ENCODE measurements at regions of chr1 and their contacts with region 1.

Region 1: DNA sequence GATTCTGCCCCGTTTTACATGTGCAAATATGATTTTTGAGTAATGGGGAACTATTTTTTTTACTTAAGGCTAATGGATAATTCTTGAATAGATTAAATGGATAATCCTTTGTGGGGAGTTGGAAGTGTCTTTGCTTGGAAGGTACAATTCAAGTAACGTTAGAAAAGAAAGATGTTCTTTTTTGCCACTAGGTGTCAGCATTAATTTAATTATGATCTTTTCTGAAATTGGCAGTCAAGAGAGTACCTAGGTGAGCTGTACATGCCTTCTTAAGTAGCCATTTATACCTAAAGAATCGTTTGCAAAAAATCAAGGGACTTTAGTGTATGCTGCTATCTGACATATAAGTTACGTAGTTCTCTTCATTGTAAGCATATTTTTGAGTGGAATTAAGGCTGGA is 2.2 kb downstream of the FBXO28 start:
- DNase-seq: peak in 1 of 2 donors; percentile 71
- ATAC-seq: peak in 2 of 3 donors; percentile 21 to 27
- H3K4me3 ChIP-seq: no peak overlapping the region
- H3K4me3 Mint-ChIP-seq: peak overlapping the region; percentile 73
- H3K27ac ChIP-seq: no peak overlapping the region
- H3K27ac Mint-ChIP-seq: peak overlapping the region; percentile 44 to 94
- H3K4me1 ChIP-seq: peaks cover 8% of the 10 kb centered on the region
- H3K4me1 Mint-ChIP-seq: peaks cover 29 to 38% of the 10 kb centered on the region in 2 donors
- H3K27me3 ChIP-seq: no peaks in the 10 kb centered on the region
- H3K27me3 Mint-ChIP-seq: peaks cover 0 to 3% of the 10 kb centered on the region in 2 donors
- CTCF ChIP-seq: peak; percentile 68

Region 2: DNA sequence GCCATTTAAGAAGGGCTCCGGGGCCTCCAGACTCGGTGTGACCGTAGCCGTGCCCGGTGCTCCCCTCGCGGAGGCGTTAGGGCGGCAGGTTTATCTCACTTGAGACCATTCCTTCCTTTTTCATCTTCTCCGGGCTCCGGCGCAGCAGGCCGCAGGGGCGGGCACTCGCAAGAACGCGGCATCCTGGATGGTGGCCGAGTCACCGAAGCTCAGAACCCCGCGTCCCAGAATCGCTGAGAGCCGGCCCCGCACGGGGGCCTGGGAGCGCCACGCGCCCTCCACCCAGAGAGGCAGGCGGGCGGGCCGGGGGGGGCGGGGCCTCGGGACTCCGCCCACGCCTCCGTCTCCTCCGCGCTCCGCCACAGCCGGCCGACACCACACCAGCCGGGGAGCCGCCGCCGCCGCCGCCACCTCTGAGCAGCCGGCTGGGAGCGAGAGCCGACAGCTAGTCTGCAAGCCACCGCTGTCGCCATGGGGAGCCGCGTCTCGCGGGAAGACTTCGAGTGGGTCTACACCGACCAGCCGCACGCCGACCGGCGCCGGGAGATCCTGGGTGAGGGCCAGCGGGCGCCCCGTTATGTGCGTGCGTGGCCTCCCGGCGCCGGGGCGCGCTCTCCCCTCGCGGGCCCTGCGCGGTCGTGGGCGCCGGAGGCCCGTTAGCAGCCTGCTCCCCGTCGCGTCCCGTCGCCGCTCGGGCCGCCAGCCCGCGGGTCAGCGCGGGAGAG is 66.9 kb after region 1 on chr1 and contains the start of gene DEGS1:
- intact Hi-C with region 1: loop called (anchors 5 kb)
- DNase-seq: peak; percentile 80 to 89
- ATAC-seq: peak; percentile 80 to 93 (median 87)
- H3K4me3 ChIP-seq: peak within 1 kb of the TSS; percentile 92
- H3K4me3 Mint-ChIP-seq: peak within 1 kb of the TSS; percentile 86
- H3K27ac ChIP-seq: peak within 1 kb of the TSS; percentile 97
- H3K27ac Mint-ChIP-seq: peak within 1 kb of the TSS; percentile 84 to 90
- H3K4me1 ChIP-seq: peaks cover 38% of the 10 kb centered on the region
- H3K4me1 Mint-ChIP-seq: peaks cover 15 to 24% of the 10 kb centered on the region in 2 donors
- H3K27me3 ChIP-seq: no peaks in the 10 kb centered on the region
- H3K27me3 Mint-ChIP-seq: no peaks in the 10 kb centered on the region
- CTCF ChIP-seq: no peak
- total RNA-seq, gene DEGS1: 28.6 to 29.2 (median 28.6) TPM

Region 3: GRCh38 chr1:224458996-224459395 is 342.9 kb after region 1 on chr1:
- intact Hi-C with region 1: loop called (anchors 1 kb)
- DNase-seq: no peak
- ATAC-seq: no peak
- H3K4me3 ChIP-seq: no peak overlapping the region
- H3K4me3 Mint-ChIP-seq: no peak overlapping the region
- H3K27ac ChIP-seq: no peak overlapping the region
- H3K27ac Mint-ChIP-seq: no peak overlapping the region
- H3K4me1 ChIP-seq: peaks cover 4% of the 10 kb centered on the region
- H3K4me1 Mint-ChIP-seq: peaks cover 11% of the 10 kb centered on the region in 2 donors
- H3K27me3 ChIP-seq: no peaks in the 10 kb centered on the region
- H3K27me3 Mint-ChIP-seq: no peaks in the 10 kb centered on the region
- CTCF ChIP-seq: no peak

Measured in natural killer cell (primary cell).